OCI-LY7 (cell line): ENCODE measurements at regions of chr1 and their contacts with region 1.

Region 1: DNA sequence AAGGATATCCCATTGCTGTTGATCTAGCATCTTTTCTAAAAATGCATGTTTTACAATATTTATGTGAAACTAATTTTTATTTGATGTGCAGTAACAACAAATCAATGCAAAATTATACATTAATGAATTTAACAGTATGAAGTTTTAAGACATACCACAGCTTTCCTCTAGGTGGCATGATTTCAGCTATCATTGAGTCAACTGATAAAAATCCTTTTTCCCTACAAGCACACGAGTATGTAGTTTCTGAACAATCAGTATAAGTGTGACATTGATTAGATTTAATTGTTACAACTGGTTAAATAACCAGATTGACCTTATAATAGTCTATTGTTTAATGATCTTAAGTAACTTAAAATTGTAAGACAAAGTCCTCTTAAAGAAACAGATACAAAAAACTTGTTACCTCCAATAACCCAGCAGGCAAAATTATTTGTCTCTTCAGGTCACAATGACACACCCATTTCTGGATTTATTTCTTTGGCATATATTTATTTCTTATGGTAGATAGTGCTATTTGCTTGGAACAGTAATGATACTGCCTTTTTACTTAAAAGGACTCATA is 5.8 kb upstream of the TGFB2 start:
- DNase-seq: peak; percentile 35
- H3K4me3 ChIP-seq: no peak overlapping the region
- H3K27ac ChIP-seq: no peak overlapping the region
- H3K4me1 ChIP-seq: no peaks in the 10 kb centered on the region
- CTCF ChIP-seq: peak; percentile 90

Region 2: GRCh38 chr1:218390618-218391017 is 51.3 kb after region 1 on chr1:
- CTCF ChIA-PET with region 1: no interaction called
- POLR2A ChIA-PET with region 1: no interaction called
- intact Hi-C with region 1: no loop called
- DNase-seq: no peak
- H3K4me3 ChIP-seq: no peak overlapping the region
- H3K27ac ChIP-seq: no peak overlapping the region
- H3K4me1 ChIP-seq: no peaks in the 10 kb centered on the region
- CTCF ChIP-seq: no peak

Region 3: GRCh38 chr1:219812491-219813203 is 1473.3 kb after region 1 on chr1:
- CTCF ChIA-PET with region 1: no interaction called
- POLR2A ChIA-PET with region 1: no interaction called
- intact Hi-C with region 1: loop called (anchors 2 kb)
- DNase-seq: peak; percentile 67
- H3K4me3 ChIP-seq: no peak overlapping the region
- H3K27ac ChIP-seq: no peak overlapping the region
- H3K4me1 ChIP-seq: no peaks in the 10 kb centered on the region
- CTCF ChIP-seq: peak; percentile 88